Activated CD4-positive, alpha-beta memory T cell treated with anti-CD3 and anti-CD28 coated beads for 36 hours (primary cell): ENCODE measurements at regions of chr3 and their contacts with region 1.

Region 1: DNA sequence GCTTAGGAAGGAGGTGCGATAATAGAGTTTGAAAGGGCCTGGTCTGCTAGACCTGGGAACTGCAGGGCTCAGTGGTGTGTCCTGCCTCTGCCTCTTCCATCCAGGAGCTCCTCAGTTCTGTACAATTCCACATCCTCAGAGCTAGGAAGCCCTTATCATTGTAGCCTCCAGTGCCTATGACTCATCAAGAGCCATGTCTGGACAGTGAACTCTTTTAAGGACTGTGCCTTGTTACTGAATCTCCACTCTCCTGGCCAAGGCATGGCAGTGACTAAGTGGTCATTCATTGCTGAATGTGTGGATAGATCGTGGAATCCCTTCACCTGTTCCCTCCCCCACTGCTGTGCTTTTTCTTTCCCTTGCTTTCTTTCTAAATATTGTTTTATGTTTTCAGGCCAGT is 2.9 kb downstream of the TIMP4 start:
- DNase-seq: no peak
- H3K4me3 Mint-ChIP-seq: no peak overlapping the region
- H3K27ac Mint-ChIP-seq: no peak overlapping the region
- H3K4me1 Mint-ChIP-seq: no peaks in the 10 kb centered on the region
- H3K27me3 Mint-ChIP-seq: peaks cover 12% of the 10 kb centered on the region

Region 2: GRCh38 chr3:12175844-12176453 is 20.1 kb after region 1 on chr3:
- CTCF ChIA-PET with region 1: interaction called, 14 read pairs
- POLR2A ChIA-PET with region 1: no interaction called
- intact Hi-C with region 1: no loop called
- DNase-seq: peak; percentile 62
- H3K4me3 Mint-ChIP-seq: no peak overlapping the region
- H3K27ac Mint-ChIP-seq: no peak overlapping the region
- H3K4me1 Mint-ChIP-seq: peaks cover 18% of the 10 kb centered on the region
- H3K27me3 Mint-ChIP-seq: no peaks in the 10 kb centered on the region